Activated CD4-positive, alpha-beta memory T cell treated with anti-CD3 and anti-CD28 coated beads for 36 hours (primary cell): ENCODE measurements at regions of chr3 and their contacts with region 1.

Region 1: GRCh38 chr3:39346785-39347585 is 17.5 kb downstream of the CCR8 start:
- DNase-seq: no peak
- H3K4me3 Mint-ChIP-seq: no peak overlapping the region
- H3K27ac Mint-ChIP-seq: peak overlapping the region; percentile 11
- H3K4me1 Mint-ChIP-seq: peaks cover 36% of the 10 kb centered on the region
- H3K27me3 Mint-ChIP-seq: no peaks in the 10 kb centered on the region

Region 2: DNA sequence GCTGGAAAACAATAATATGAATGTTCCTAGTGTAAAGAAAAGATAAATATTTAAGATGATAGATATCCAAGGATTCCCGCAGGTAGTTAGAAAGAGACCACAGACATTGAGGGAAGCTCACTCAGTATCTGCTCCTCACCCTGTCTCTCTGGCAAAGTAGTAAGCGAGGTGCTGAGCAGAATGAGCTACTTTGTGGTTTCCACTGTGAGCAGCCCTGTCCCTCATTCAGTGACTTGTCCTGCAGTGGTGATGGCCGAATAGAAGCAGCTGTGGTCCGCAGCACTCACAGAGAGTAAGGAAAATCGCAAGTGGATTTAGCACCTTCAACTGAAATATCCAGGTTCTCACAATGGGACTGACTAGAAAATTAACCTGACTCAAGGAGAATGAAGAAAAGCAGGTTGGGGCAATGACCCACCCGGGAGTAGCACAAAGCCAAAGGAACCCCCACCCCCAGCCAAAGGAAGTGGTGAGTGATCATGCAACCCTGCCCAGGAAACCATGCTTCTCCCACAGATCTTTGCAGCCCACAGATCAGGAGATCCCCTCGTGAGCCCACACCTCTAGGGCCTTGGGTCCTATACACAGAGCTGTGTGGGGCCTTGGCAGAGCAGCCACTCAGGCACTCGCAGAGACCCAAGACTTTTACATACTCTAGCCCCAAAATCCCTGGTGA is 14.4 kb after region 1 on chr3:
- CTCF ChIA-PET with region 1: no interaction called
- POLR2A ChIA-PET with region 1: interaction called, 4 read pairs
- intact Hi-C with region 1: loop called (anchors 2 kb)
- DNase-seq: peak; percentile 75
- H3K4me3 Mint-ChIP-seq: peak overlapping the region; percentile 35
- H3K27ac Mint-ChIP-seq: peak overlapping the region; percentile 53
- H3K4me1 Mint-ChIP-seq: peaks cover 43% of the 10 kb centered on the region
- H3K27me3 Mint-ChIP-seq: no peaks in the 10 kb centered on the region